ENCODE measurements at regions of chr2 and their contacts with region 1.

Region 1: GRCh38 chr2:135664623-135665068 is 77.0 kb upstream of the UBXN4 start:
- DNase-seq: no peak
- ATAC-seq: peak; percentile 79
- H3K4me3 Mint-ChIP-seq: no peak overlapping the region
- H3K27ac Mint-ChIP-seq: peak overlapping the region; percentile 1
- H3K4me1 Mint-ChIP-seq: peaks cover 30% of the 10 kb centered on the region
- H3K27me3 Mint-ChIP-seq: no peaks in the 10 kb centered on the region

Region 2: DNA sequence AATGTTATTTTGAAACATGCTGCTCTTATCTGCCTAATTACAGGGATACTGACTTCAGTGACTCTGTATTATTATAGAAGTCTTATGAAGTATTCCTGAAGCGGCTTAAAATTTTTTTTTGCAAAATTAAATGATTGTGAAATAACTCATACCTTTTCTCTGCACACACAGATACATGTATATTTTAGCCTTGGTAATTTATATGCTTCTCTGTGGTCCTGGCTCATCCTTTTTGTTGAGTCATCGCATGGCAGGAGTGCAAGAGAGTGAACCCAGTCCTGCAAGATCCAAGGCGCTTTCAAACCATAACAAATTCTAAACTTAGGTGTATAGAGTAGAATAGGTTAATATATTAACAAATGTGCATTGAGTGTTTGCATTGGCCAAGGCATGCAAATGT is 737.5 kb before region 1 on chr2:
- CTCF ChIA-PET with region 1: no interaction called
- POLR2A ChIA-PET with region 1: no interaction called
- intact Hi-C with region 1: no loop called
- DNase-seq: no peak
- ATAC-seq: peak; percentile 63
- H3K4me3 Mint-ChIP-seq: no peak overlapping the region
- H3K27ac Mint-ChIP-seq: peak overlapping the region; percentile 14
- H3K4me1 Mint-ChIP-seq: peaks cover 72% of the 10 kb centered on the region
- H3K27me3 Mint-ChIP-seq: no peaks in the 10 kb centered on the region

Region 3: DNA sequence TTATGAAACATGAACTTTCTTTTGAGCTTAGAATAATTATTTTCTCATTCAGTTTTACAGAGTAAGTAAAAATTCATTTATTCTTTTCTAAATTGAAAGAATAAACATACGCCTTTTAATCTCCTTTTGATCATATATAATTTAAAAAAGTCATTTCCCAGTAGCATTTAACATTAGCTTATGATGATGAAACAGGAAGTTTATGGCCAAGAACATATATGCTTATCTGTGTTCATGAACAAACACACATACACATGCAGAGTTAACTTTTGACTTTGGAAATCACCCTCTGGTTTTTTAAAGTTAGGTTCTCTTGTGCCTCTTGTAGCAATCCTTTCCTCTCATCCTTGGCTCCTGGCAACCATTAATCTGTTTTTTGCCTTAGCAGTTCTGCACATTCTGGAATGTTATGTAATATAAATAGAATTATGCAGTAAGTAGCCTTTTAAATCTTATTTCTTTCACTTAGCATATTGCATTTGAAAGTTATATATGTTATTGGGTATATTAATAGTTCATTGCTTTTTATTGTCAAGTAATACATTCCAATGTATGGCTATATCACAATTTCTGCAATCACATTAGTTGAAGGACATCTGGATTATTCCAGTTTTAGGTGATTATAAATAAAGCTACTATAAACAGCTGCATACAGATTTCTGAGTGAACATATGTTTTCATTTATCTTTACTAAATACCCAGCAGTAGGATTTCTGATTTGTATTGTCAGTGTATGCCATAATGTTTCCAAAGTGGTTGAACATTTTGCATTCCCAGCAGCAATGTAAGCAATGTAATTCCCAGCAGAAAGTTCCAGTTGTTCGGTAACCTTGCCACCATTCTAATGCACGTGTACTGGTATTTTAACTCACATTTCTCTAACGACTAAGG is 343.9 kb before region 1 on chr2:
- CTCF ChIA-PET with region 1: no interaction called
- POLR2A ChIA-PET with region 1: no interaction called
- intact Hi-C with region 1: no loop called
- DNase-seq: no peak
- ATAC-seq: no peak
- H3K4me3 Mint-ChIP-seq: no peak overlapping the region
- H3K27ac Mint-ChIP-seq: no peak overlapping the region
- H3K4me1 Mint-ChIP-seq: no peaks in the 10 kb centered on the region
- H3K27me3 Mint-ChIP-seq: no peaks in the 10 kb centered on the region

Region 4: DNA sequence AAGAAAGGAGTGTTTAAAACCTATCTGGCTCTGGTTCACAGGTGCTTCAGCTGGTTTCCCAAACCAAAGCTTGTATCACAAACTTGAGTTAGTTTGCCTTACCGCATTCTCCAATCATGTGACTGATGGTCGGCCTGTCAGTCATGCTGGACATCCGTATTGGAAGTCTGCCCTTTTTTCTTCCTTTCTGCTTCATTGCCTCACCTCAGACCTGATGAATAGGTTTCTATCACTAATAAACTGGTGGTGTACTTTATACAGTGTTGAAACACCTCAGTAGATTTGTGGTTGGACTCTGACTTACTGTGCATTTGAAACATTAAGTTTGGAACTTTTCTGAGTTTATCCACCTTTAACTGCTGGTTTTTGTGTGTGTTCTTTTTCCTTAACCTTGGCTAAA is 49.2 kb before region 1 on chr2:
- CTCF ChIA-PET with region 1: no interaction called
- POLR2A ChIA-PET with region 1: no interaction called
- intact Hi-C with region 1: loop called (anchors 1 kb)
- DNase-seq: no peak
- ATAC-seq: no peak
- H3K4me3 Mint-ChIP-seq: no peak overlapping the region
- H3K27ac Mint-ChIP-seq: no peak overlapping the region
- H3K4me1 Mint-ChIP-seq: peaks cover 8% of the 10 kb centered on the region
- H3K27me3 Mint-ChIP-seq: no peaks in the 10 kb centered on the region

Region 5: GRCh38 chr2:135637456-135638087 is 27.1 kb before region 1 on chr2:
- CTCF ChIA-PET with region 1: no interaction called
- POLR2A ChIA-PET with region 1: no interaction called
- intact Hi-C with region 1: loop called in 1 of 2 experiments (anchors 1 kb)
- DNase-seq: peak; percentile 7
- ATAC-seq: peak; percentile 85
- H3K4me3 Mint-ChIP-seq: no peak overlapping the region
- H3K27ac Mint-ChIP-seq: peak overlapping the region; percentile 49
- H3K4me1 Mint-ChIP-seq: peaks cover 11% of the 10 kb centered on the region
- H3K27me3 Mint-ChIP-seq: no peaks in the 10 kb centered on the region

Region 6: DNA sequence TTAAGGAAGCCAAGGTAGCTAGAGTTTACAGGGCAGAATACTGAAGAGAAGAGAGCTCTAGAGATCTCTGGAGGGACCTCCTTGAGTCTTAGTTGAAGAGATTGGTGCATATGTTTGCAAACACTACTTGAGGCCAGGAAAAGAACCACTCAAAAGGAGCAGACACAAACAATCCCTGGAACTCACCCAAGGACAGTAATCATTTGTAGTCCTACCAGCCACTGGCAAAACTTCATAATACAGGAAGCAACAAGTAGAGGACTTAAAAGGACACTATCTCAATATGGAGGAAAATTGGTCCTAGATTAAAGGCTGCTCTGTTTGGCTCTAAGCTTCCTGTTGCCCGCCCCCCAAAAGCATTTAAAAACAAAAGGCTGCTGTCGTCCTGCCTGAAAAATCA is 30.1 kb after region 1 on chr2:
- CTCF ChIA-PET with region 1: no interaction called
- POLR2A ChIA-PET with region 1: no interaction called
- intact Hi-C with region 1: loop called in 1 of 2 experiments (anchors 5 kb)
- DNase-seq: no peak
- ATAC-seq: no peak
- H3K4me3 Mint-ChIP-seq: no peak overlapping the region
- H3K27ac Mint-ChIP-seq: no peak overlapping the region
- H3K4me1 Mint-ChIP-seq: peaks cover 12% of the 10 kb centered on the region
- H3K27me3 Mint-ChIP-seq: no peaks in the 10 kb centered on the region

Region 7: GRCh38 chr2:135843671-135844070 is 179.0 kb after region 1 on chr2:
- CTCF ChIA-PET with region 1: no interaction called
- POLR2A ChIA-PET with region 1: no interaction called
- intact Hi-C with region 1: no loop called
- DNase-seq: no peak
- ATAC-seq: no peak
- H3K4me3 Mint-ChIP-seq: no peak overlapping the region
- H3K27ac Mint-ChIP-seq: no peak overlapping the region
- H3K4me1 Mint-ChIP-seq: peaks cover 6% of the 10 kb centered on the region
- H3K27me3 Mint-ChIP-seq: no peaks in the 10 kb centered on the region

Measured in activated CD4-positive, alpha-beta T cell treated with anti-CD3 and anti-CD28 coated beads for 36 hours (primary cell).